ENCODE measurements at regions of chr2 and their contacts with region 1.

Region 1: GRCh38 chr2:106085181-106085940 is 108.7 kb downstream of the UXS1 start:
- DNase-seq: peak in 3 of 5 donors; percentile 48 to 55 (median 51)
- ATAC-seq: peak in 3 of 4 donors; percentile 61 to 84 (median 72)
- H3K4me3 ChIP-seq: no peak overlapping the region
- H3K27ac ChIP-seq: peak overlapping the region in 1 of 12 donors; percentile 7
- H3K4me1 ChIP-seq: peaks cover 0 to 7% (median 0%) of the 10 kb centered on the region in 12 donors
- H3K27me3 ChIP-seq: no peaks in the 10 kb centered on the region
- CTCF ChIP-seq: peak; percentile 19 to 67 (median 47)
- POLR2A ChIP-seq: no peak

Region 2: GRCh38 chr2:105582952-105583660 is 502.3 kb before region 1 on chr2:
- intact Hi-C with region 1: loop called in 9 of 10 experiments (anchors 5 to 10 kb)
- DNase-seq: no peak
- ATAC-seq: no peak
- H3K4me3 ChIP-seq: no peak overlapping the region
- H3K27ac ChIP-seq: no peak overlapping the region
- H3K4me1 ChIP-seq: no peaks in the 10 kb centered on the region
- H3K27me3 ChIP-seq: no peaks in the 10 kb centered on the region
- CTCF ChIP-seq: no peak
- POLR2A ChIP-seq: no peak

Region 3: GRCh38 chr2:106044021-106044420 is 41.3 kb before region 1 on chr2:
- intact Hi-C with region 1: no loop called
- DNase-seq: no peak
- ATAC-seq: no peak
- H3K4me3 ChIP-seq: no peak overlapping the region
- H3K27ac ChIP-seq: no peak overlapping the region
- H3K4me1 ChIP-seq: peaks cover 0 to 2% (median 0%) of the 10 kb centered on the region in 12 donors
- H3K27me3 ChIP-seq: no peaks in the 10 kb centered on the region
- CTCF ChIP-seq: no peak
- POLR2A ChIP-seq: no peak

Region 4: DNA sequence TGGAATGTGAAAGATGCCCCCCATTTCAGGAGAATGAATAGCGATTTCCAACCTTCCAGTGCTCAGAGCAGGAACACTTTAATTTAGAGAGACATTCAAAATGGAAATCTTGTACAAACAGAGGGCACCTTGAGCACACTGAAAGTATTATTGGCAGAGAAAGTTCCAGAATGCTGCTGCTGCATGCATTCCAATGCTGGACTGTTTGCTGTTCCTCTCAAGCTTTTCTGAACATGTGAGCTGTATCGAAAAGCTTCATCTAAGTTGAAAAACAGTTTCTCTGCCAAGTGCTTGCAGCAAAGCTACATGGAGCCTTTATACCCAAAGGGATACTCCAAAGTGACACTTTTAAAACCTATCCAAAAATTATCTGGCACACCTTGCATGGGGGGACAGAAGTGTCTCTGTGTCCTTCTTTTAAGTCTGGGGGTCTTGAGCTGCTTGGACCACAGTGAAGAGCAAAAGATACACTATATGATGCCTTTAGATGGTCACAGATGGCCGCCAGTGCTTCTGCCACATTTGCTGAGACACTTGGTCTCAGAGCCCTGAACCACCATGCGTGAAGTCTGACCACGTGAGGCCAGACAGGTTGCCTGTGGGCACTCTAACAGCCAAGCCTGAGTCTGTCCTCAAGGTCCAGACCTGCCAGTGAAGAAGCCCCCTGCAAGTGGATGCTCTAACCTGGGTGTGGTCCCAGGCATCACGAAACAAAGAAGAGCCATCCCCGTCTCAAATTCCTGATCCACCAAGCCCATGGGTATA is 89.9 kb after region 1 on chr2:
- intact Hi-C with region 1: no loop called
- DNase-seq: no peak
- ATAC-seq: no peak
- H3K4me3 ChIP-seq: no peak overlapping the region
- H3K27ac ChIP-seq: no peak overlapping the region
- H3K4me1 ChIP-seq: peaks cover 0 to 5% (median 0%) of the 10 kb centered on the region in 12 donors
- H3K27me3 ChIP-seq: no peaks in the 10 kb centered on the region
- CTCF ChIP-seq: no peak
- POLR2A ChIP-seq: no peak

Region 5: DNA sequence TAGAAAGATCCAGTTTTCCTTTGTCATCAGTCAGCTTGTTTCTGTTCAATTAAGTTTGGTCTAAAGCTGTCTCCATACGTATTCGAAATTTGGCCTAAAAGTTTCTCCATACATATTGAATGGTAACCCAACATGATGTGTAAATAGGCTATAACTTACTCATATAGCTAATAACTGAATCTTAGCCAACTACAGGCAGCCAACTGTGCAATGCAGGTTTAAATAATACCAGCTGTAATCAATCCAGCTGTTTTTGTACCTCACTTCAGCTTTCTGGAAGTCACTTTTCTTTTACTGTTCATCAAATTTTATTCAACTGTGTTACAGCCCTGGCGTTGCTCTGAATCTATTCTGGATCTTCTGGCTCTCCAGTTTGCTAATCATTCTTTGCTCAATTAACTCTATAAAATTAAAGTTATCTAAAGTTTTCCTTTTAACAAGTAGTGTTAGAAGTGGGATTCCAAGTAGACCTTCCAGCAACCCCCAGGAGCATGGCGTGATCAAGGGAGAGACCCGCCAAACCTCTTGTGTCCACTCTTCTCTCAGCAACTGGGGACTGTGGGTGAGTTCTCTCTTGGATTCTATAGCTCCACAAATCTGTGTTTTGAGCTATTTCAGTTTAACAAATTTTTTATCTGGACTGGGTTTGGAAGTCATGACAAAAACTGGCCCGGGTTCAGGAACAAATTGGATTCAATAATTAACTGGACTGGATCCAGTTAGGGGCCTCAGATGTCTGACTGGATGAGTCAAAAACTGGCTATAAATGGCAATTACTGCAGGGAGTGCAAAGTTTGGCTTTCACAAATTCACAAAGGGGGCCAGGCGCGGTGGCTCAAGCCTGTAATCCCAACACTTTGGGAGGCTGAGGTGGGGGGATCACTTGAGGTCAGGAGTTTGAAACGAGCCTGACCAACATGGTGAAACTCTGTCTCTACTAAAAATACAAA is 1130.3 kb after region 1 on chr2:
- intact Hi-C with region 1: no loop called
- DNase-seq: no peak
- ATAC-seq: peak in 2 of 4 donors; percentile 16 to 53
- H3K4me3 ChIP-seq: no peak overlapping the region
- H3K27ac ChIP-seq: no peak overlapping the region
- H3K4me1 ChIP-seq: no peaks in the 10 kb centered on the region
- H3K27me3 ChIP-seq: no peaks in the 10 kb centered on the region
- CTCF ChIP-seq: no peak
- POLR2A ChIP-seq: no peak

Measured in heart left ventricle (tissue), 16 donors.